ENCODE measurements at regions of chr12 and their contacts with region 1.

Region 1: GRCh38 chr12:7959701-7960121 is 23.7 kb upstream of the SLC2A3 start:
- DNase-seq: no peak
- ATAC-seq: no peak
- H3K4me3 ChIP-seq: no peak overlapping the region
- H3K27ac ChIP-seq: no peak overlapping the region
- H3K4me1 ChIP-seq: no peaks in the 10 kb centered on the region
- H3K27me3 ChIP-seq: no peaks in the 10 kb centered on the region

Region 2: GRCh38 chr12:7555752-7556151 is 404.0 kb before region 1 on chr12:
- intact Hi-C with region 1: no loop called
- DNase-seq: no peak
- ATAC-seq: no peak
- H3K4me3 ChIP-seq: no peak overlapping the region
- H3K27ac ChIP-seq: no peak overlapping the region
- H3K4me1 ChIP-seq: no peaks in the 10 kb centered on the region
- H3K27me3 ChIP-seq: no peaks in the 10 kb centered on the region

Region 3: DNA sequence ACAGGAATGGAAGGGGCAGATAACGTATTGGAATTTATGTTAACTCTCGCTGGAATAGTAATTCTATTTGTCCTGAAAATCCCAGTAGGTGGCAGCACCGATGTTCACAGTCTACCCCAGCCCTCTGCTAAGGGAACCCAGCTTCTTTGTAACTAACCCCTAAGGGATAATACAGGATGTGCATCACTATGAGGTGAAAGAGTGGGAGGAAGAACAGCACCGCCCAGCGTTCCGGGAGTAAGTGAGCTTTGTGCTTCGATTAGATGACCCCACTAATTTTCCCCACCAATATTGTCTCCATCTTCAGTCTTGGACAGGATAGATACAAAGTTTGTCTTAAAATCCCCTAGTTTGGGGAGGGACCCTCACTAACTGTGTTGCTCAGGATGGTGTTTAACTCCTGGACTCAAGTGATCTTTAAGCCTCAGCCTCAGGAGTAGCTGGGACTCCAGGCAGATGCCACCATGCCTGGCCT is 26.4 kb before region 1 on chr12:
- intact Hi-C with region 1: loop called in 1 of 2 experiments (anchors 2 kb)
- DNase-seq: peak; percentile 73 to 83
- ATAC-seq: peak; percentile 86
- H3K4me3 ChIP-seq: no peak overlapping the region
- H3K27ac ChIP-seq: no peak overlapping the region
- H3K4me1 ChIP-seq: peaks cover 0 to 2% of the 10 kb centered on the region in 2 donors
- H3K27me3 ChIP-seq: no peaks in the 10 kb centered on the region